ENCODE measurements at regions of chr15 and their contacts with region 1.

Region 1: DNA sequence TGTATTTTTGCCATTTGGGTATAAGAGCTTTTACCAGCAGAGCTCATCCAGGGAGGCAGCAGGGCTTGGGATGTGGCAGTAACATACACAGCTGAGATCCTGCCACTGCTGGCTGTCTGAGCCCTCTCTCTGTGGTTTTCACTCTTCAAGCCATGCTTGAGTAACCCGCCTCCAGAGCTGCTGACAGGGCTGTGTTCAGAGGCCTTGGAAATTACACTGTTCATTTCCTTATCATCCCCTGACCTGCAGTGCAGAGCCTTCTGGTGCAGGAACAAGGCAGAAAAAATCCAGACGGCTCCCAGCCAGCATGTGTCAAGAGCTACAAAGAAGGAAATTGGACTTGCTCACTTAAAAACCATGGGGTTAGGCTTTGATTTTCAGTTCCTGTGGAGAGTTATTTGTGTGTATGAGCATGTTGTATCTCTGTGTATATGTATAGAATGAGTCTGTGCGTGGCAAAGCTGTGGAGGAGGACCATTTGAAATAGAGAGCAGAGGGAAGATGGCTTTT is 47.0 kb downstream of the ZNF609 start:
- DNase-seq: no peak
- ATAC-seq: no peak
- H3K4me3 ChIP-seq: no peak overlapping the region
- H3K27ac ChIP-seq: no peak overlapping the region
- H3K4me1 ChIP-seq: no peaks in the 10 kb centered on the region; the same call in 1 of the 2 replicates
- H3K27me3 ChIP-seq: no peaks in the 10 kb centered on the region
- CTCF ChIP-seq: no peak

Region 2: GRCh38 chr15:64460206-64460734 is 47.1 kb before region 1 on chr15 and contains the start of gene ZNF609:
- CTCF ChIA-PET with region 1: no interaction called
- POLR2A ChIA-PET with region 1: interaction called, 12 read pairs
- in situ Hi-C with region 1: no loop called
- intact Hi-C with region 1: no loop called
- DNase-seq: peak; percentile 64
- ATAC-seq: peak; percentile 93
- H3K4me3 ChIP-seq: peak within 1 kb of the TSS; percentile 58 to 89
- H3K27ac ChIP-seq: peak within 1 kb of the TSS; percentile 89
- H3K4me1 ChIP-seq: peaks cover 38% of the 10 kb centered on the region
- H3K27me3 ChIP-seq: no peaks in the 10 kb centered on the region
- CTCF ChIP-seq: no peak
- total RNA-seq, gene ZNF609: 47.2 TPM

Region 3: GRCh38 chr15:64536244-64536836 is 29.0 kb after region 1 on chr15:
- CTCF ChIA-PET with region 1: no interaction called
- POLR2A ChIA-PET with region 1: interaction called, 14 read pairs
- in situ Hi-C with region 1: no loop called
- intact Hi-C with region 1: no loop called
- DNase-seq: peak; percentile 64
- ATAC-seq: peak; percentile 90
- H3K4me3 ChIP-seq: no peak overlapping the region
- H3K27ac ChIP-seq: 0 out of 2 replicates have a peak overlapping the region, but pooled peaks have one; percentile 6
- H3K4me1 ChIP-seq: peaks cover 15% of the 10 kb centered on the region
- H3K27me3 ChIP-seq: no peaks in the 10 kb centered on the region
- CTCF ChIP-seq: no peak

Region 4: GRCh38 chr15:64841258-64842095 is 334.1 kb after region 1 on chr15 and contains the start of gene PLEKHO2:
- CTCF ChIA-PET with region 1: interaction called, 10 read pairs
- POLR2A ChIA-PET with region 1: no interaction called
- in situ Hi-C with region 1: no loop called
- intact Hi-C with region 1: no loop called
- DNase-seq: no peak
- ATAC-seq: peak; percentile 96
- H3K4me3 ChIP-seq: peak within 1 kb of the TSS; percentile 87 to 88
- H3K27ac ChIP-seq: peak within 1 kb of the TSS; percentile 91
- H3K4me1 ChIP-seq: peaks cover 10% of the 10 kb centered on the region
- H3K27me3 ChIP-seq: no peaks in the 10 kb centered on the region
- CTCF ChIP-seq: no peak
- total RNA-seq, gene PLEKHO2: 11.1 TPM